ENCODE measurements at regions of chr3 and their contacts with region 1.

Region 1: GRCh38 chr3:158109804-158110657 is at the start of gene RSRC1:
- DNase-seq: peak; percentile 80
- CTCF ChIP-seq: no peak

Region 2: GRCh38 chr3:158121295-158121694 is 11.3 kb after region 1 on chr3:
- CTCF ChIA-PET with region 1: interaction called, 14 read pairs
- POLR2A ChIA-PET with region 1: interaction called, 3 read pairs
- DNase-seq: no peak
- CTCF ChIP-seq: no peak

Region 3: GRCh38 chr3:158434412-158435038 is 324.5 kb after region 1 on chr3:
- CTCF ChIA-PET with region 1: interaction called, 22 read pairs
- POLR2A ChIA-PET with region 1: no interaction called
- DNase-seq: peak; percentile 9
- CTCF ChIP-seq: peak; percentile 72

Measured in GM10248 (cell line).